ENCODE measurements at regions of chr4 and their contacts with region 1.

Region 1: DNA sequence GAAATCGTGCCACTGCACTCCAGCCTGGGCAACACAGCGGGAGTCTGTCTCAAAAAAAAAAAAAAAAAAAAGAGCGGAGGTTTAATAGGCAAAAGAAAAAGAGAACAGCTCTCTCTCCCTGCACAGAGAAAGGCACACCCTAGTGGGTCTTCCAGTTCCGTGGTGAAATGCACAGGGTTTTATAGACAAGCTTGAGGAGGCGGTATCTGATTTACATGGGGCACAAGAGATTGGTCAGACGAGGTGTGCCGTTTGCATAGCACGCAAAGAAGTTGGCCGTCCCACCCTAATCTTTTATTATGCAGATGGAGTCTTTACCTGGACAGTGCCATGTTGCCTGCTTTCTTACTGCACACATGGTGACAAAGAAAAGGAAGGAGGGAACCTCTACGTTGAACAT is 33.5 kb upstream of the REST start:
- DNase-seq: no peak
- H3K4me3 ChIP-seq: no peak overlapping the region
- H3K27ac ChIP-seq: no peak overlapping the region
- H3K4me1 ChIP-seq: peaks cover 18% of the 10 kb centered on the region
- CTCF ChIP-seq: no peak

Region 2: DNA sequence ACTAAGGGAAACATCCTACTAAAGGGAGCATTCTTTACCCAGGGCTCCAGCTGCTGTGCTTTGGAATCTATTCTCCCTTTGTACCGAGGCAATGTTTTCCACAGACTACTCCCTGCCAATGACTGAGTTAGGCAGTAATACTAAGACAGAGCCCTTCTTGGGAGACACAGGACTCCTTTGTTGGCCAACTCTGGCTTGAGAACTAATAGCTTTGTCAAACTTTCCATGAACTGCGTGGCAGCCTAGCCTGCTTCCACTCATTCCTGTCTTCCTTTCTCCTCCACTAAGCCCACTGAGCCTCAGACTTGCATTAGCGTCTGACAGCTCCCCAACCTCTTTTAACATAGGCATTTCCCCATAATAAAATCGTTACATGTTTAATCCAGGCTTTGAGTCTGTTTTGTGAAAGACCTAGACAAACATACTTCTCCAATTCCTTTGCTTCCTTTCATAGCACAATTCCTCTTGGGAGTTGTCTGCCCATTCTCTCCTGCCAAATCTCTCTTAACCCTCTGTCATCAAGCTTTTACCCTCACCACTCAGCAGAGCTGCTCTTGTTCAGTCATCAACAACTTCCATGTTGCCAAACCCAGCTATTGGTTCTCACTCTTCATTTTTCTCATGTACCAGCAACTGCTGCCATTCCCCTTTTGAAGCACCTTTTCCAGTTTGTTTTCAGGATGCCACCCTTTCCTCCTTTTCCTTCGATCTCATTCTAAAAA is 536.3 kb after region 1 on chr4:
- CTCF ChIA-PET with region 1: no interaction called
- POLR2A ChIA-PET with region 1: interaction called, 10 read pairs
- intact Hi-C with region 1: no loop called
- DNase-seq: no peak
- H3K4me3 ChIP-seq: no peak overlapping the region
- H3K27ac ChIP-seq: no peak overlapping the region
- H3K4me1 ChIP-seq: no peaks in the 10 kb centered on the region
- CTCF ChIP-seq: no peak